Activated CD4-positive, alpha-beta T cell treated with anti-CD3 and anti-CD28 coated beads, Interleukin-2, amount 10 ng/mL, durations not matched to agents 24 days and 14 days (primary cell): ENCODE measurements at regions of chr11 and their contacts with region 1.

Region 1: GRCh38 chr11:93652161-93652597 is 9.3 kb upstream of the CEP295 start:
- DNase-seq: peak; percentile 80
- H3K4me3 Mint-ChIP-seq: no peak overlapping the region
- H3K27ac Mint-ChIP-seq: no peak overlapping the region
- H3K4me1 Mint-ChIP-seq: peaks cover 13% of the 10 kb centered on the region
- H3K27me3 Mint-ChIP-seq: peaks cover 22% of the 10 kb centered on the region

Region 2: DNA sequence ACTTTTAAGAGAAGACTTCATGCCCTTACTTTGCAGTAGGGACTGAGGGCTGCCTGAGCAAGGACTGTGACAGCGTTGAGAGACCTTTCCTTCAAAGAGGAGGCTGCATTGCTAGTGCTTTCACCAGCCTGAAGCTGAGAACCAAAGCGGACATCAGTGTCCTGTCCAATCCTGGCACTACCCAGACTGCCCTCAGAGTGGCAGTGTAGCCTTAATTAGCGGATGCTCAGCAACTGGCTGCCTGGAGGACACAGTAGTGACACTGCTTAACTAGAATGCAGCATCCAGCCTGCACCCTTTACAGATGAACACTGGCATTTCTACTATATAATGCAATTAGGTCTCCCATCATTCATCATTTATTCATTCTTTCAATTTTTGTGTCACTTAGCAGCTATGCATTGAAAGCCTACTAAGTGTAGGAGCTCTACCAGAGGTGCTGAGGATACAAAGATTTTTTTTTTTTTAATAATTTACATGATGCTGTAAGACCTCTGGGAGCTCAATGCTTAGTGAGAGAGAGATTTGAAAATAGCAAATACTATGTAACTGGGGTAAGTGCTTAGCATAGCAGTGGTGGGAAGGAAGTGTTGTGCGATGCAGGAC is 417.5 kb before region 1 on chr11:
- intact Hi-C with region 1: loop called (anchors 1 kb)
- DNase-seq: peak; percentile 92
- H3K4me3 Mint-ChIP-seq: no peak overlapping the region
- H3K27ac Mint-ChIP-seq: no peak overlapping the region
- H3K4me1 Mint-ChIP-seq: no peaks in the 10 kb centered on the region
- H3K27me3 Mint-ChIP-seq: peaks cover 30% of the 10 kb centered on the region

Region 3: GRCh38 chr11:93591247-93591898 is 60.8 kb before region 1 on chr11:
- intact Hi-C with region 1: no loop called
- DNase-seq: no peak
- H3K4me3 Mint-ChIP-seq: no peak overlapping the region
- H3K27ac Mint-ChIP-seq: no peak overlapping the region
- H3K4me1 Mint-ChIP-seq: no peaks in the 10 kb centered on the region
- H3K27me3 Mint-ChIP-seq: peaks cover 5% of the 10 kb centered on the region

Region 4: DNA sequence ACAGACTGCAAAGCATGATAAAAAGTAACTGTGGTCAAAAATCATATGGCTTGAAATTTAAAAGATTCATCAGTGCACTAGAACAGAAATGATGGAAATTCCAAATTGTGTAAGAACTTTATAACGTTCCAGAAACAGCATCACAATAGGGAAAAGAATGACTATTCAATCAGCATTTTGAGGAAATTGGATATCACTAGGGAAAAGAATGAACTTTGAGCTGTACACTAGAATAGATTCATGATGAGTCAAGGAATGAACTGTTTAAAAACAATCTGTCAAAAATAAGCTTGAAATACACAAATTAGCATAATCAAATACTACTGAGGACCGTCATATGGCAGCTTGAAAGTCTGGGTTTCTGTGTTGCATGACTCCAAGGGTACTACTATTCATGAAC is 348.5 kb after region 1 on chr11:
- intact Hi-C with region 1: no loop called
- DNase-seq: no peak
- H3K4me3 Mint-ChIP-seq: no peak overlapping the region
- H3K27ac Mint-ChIP-seq: no peak overlapping the region
- H3K4me1 Mint-ChIP-seq: no peaks in the 10 kb centered on the region
- H3K27me3 Mint-ChIP-seq: no peaks in the 10 kb centered on the region